OCI-LY7 (cell line): ENCODE measurements at regions of chr14 and their contacts with region 1.

Region 1: DNA sequence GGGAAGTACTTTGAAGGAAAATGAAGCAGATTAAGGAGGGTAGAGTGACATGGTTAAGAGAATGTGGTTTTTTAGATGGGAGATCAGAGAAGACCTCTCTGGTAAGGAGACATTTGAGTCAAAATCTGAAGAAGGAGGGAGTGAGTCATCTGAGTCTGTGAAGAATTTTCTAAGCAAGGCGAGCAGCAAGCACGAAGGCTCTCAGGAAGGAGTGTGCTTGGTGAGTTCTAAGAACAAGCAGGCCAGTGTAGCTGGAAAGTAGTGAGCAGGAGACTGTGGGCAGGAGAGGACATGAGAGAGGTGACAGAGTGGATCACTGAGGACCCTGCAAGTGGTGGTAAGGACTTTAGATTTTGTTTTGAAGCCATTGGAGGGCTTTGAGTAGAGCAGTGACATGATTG is 76.3 kb upstream of the FUT8 start:
- DNase-seq: no peak
- H3K4me3 ChIP-seq: no peak overlapping the region
- H3K27ac ChIP-seq: no peak overlapping the region
- H3K4me1 ChIP-seq: peaks cover 61% of the 10 kb centered on the region
- CTCF ChIP-seq: no peak

Region 2: DNA sequence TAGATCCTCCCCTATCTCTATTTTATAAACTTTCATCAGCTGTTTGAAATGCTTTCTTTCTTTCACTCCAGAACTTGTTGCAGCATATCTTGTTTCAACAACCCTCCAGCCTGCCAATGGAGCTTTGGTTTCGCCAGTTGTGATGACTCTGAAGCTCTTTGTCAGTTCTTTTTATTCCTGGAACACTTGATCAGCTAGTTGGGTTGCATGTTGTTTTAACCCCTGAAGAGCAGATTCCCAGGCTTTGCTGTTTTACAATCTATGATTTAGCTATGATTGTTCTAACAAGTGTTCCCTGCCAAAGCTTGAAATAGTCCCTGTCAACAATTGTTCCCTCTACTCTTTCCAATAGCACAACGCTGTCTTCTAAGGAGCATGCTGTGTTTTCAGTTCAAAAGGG is 25.7 kb after region 1 on chr14:
- CTCF ChIA-PET with region 1: no interaction called
- POLR2A ChIA-PET with region 1: interaction called, 13 read pairs
- intact Hi-C with region 1: no loop called
- DNase-seq: no peak
- H3K4me3 ChIP-seq: no peak overlapping the region
- H3K27ac ChIP-seq: no peak overlapping the region
- H3K4me1 ChIP-seq: peaks cover 54% of the 10 kb centered on the region
- CTCF ChIP-seq: no peak